ENCODE measurements at regions of chr2 and their contacts with region 1.

Region 1: DNA sequence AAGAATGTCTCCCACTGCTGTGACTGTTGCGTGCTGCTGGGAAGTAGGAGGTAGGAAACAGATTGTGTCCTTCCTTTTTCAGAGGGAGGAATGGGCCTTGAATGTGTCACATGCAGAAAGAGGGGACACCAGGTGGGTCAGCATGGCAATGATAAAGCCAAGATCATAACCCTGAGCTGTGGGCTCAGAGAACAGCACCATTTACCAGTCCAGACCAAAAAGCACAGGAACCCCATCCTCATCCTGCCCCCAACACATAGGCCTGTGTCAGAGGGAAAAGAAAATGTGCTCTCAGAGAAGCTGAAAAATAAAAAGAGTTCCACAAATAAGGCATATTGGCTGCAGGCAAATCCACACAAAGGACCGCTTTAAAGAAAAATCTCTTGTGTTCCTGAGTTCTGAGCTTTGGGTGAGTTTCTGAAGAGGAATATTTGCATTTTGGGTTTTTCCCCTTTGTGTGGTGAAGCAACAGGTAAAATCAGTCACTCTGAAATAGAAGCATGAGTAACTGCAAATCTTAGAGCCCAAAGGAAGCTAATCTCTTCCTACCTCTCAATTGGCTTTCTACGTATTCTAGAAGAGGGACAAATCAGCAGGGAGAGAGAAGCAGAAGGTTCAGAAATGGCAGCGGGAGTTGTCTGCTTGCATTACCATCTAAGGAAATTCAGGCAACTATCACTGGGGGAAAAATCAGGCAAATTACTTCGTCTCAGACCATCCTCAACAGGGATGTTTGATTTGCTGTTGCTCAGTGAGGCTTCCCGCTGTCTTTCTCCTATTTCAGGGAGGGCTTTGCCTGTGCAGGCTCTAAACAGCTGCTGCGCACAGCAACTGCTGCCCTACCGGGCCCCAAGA is 106.8 kb downstream of the BCL11A start:
- DNase-seq: peak; percentile 83
- ATAC-seq: peak; percentile 72
- H3K4me3 ChIP-seq: peak overlapping the region in 4 of 5 experiments; percentile 7 to 32 (median 28)
- H3K4me3 Mint-ChIP-seq: peak overlapping the region; percentile 77
- H3K27ac ChIP-seq: peak overlapping the region; percentile 88 to 99
- H3K27ac Mint-ChIP-seq: peak overlapping the region; percentile 97
- H3K4me1 ChIP-seq: peaks cover 85 to 87% of the 10 kb centered on the region in 2 donors
- H3K4me1 Mint-ChIP-seq: peaks cover 84% of the 10 kb centered on the region
- H3K27me3 ChIP-seq: no peaks in the 10 kb centered on the region
- H3K27me3 Mint-ChIP-seq: no peaks in the 10 kb centered on the region
- CTCF ChIP-seq: no peak

Region 2: DNA sequence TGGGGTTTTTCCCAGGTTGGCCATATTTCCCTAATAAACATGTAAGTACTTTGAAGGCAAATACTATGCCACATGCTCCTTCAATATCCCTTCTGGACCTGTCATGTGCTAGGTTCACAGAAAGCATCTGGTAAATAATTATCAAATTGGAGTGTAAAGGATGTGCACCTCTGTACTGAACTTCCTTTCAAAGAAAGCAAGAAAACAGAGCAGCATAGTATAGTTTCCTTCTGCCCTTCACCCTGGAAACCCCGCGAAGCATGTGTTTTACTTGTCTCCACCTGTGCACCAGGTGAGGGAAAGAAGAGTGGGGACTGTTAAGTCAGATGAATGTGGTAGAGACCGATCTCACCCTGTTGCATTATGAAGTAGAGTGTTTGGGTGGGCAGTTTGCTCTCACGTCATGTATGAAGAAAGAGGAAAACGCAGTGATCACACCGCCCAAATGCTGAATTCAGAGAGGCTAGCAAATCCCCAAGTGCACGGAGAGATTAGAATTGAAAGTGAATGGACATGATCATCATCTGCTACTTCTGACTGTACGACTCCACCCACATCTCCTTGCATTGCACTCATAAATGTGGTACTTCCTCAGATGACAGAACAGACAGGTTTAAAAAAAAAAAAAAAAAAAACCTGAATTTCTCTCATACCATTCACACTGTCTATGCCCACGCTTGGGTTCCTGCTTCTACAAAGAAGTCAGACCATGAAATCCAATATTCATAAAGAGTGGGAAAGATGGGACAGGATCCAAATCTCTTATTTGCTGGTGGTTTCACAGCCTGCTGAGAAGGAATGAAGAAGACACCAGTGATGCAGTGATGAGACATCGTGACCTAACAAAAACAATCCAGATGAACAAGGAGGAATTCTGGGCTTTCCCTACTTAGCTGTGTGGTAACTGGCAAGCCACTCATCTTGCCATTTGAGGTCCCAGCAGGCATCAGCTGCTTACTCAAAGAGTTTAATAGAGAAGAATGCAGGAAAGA is 341.8 kb before region 1 on chr2:
- CTCF ChIA-PET with region 1: no interaction called
- POLR2A ChIA-PET with region 1: no interaction called
- intact Hi-C with region 1: no loop called
- DNase-seq: peak; percentile 64
- ATAC-seq: peak; percentile 92
- H3K4me3 ChIP-seq: peak overlapping the region in 4 of 5 experiments; percentile 23 to 58 (median 52)
- H3K4me3 Mint-ChIP-seq: peak overlapping the region; percentile 87
- H3K27ac ChIP-seq: peak overlapping the region; percentile 19 to 51
- H3K27ac Mint-ChIP-seq: peak overlapping the region; percentile 57
- H3K4me1 ChIP-seq: peaks cover 18 to 25% of the 10 kb centered on the region in 2 donors
- H3K4me1 Mint-ChIP-seq: peaks cover 32% of the 10 kb centered on the region
- H3K27me3 ChIP-seq: no peaks in the 10 kb centered on the region
- H3K27me3 Mint-ChIP-seq: no peaks in the 10 kb centered on the region
- CTCF ChIP-seq: no peak

Region 3: GRCh38 chr2:60317844-60318243 is 128.8 kb before region 1 on chr2:
- CTCF ChIA-PET with region 1: interaction called, 3 read pairs
- POLR2A ChIA-PET with region 1: no interaction called
- intact Hi-C with region 1: loop called (anchors 5 kb)
- DNase-seq: peak; percentile 87
- ATAC-seq: peak; percentile 83
- H3K4me3 ChIP-seq: peak overlapping the region in 1 of 5 experiments; percentile 28
- H3K4me3 Mint-ChIP-seq: peak overlapping the region; percentile 46
- H3K27ac ChIP-seq: peak overlapping the region; percentile 56 to 75
- H3K27ac Mint-ChIP-seq: peak overlapping the region; percentile 73
- H3K4me1 ChIP-seq: peaks cover 73 to 74% of the 10 kb centered on the region in 2 donors
- H3K4me1 Mint-ChIP-seq: peaks cover 86% of the 10 kb centered on the region
- H3K27me3 ChIP-seq: no peaks in the 10 kb centered on the region
- H3K27me3 Mint-ChIP-seq: no peaks in the 10 kb centered on the region
- CTCF ChIP-seq: no peak

Region 4: GRCh38 chr2:60484133-60484645 is 37.5 kb after region 1 on chr2:
- CTCF ChIA-PET with region 1: interaction called, 3 read pairs
- POLR2A ChIA-PET with region 1: no interaction called
- intact Hi-C with region 1: loop called (anchors 2 kb)
- DNase-seq: peak; percentile 76
- ATAC-seq: peak; percentile 68
- H3K4me3 ChIP-seq: peak overlapping the region; percentile 11 to 59 (median 48)
- H3K4me3 Mint-ChIP-seq: peak overlapping the region; percentile 79
- H3K27ac ChIP-seq: peak overlapping the region; percentile 76 to 93
- H3K27ac Mint-ChIP-seq: peak overlapping the region; percentile 88
- H3K4me1 ChIP-seq: peaks cover 99% of the 10 kb centered on the region in 2 donors
- H3K4me1 Mint-ChIP-seq: peaks cover 94% of the 10 kb centered on the region
- H3K27me3 ChIP-seq: no peaks in the 10 kb centered on the region
- H3K27me3 Mint-ChIP-seq: no peaks in the 10 kb centered on the region
- CTCF ChIP-seq: no peak

Region 5: DNA sequence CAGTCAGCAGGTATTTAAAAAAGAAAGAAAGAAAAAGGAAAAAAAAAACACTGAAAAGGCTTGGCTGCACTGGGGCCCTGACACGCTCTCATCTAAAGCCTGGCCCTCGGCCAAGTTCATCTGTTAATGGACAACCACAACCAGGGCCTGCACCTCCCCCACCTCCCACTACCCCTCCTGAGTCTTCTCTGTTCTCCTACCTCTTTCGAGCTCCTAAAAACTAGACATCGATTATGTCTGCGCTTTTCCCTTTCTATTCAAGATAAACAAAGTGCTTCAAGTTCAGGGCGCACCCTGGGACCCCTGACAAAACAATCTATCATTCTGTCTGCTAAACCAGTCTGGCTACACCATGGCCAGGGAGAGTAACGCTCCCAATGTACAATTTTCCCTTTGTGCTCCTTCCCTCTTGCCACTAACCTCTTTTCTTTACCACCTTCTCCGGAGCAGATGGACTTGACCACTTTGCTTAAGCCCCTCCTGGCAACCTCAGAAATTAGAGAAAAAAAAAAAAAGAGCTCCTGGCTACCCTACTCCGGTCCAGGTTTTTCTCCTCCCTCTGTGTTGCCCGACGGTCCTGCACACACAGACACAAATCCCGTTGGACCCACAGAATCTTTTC is 84.1 kb after region 1 on chr2:
- CTCF ChIA-PET with region 1: no interaction called
- POLR2A ChIA-PET with region 1: interaction called, 5 read pairs
- intact Hi-C with region 1: loop called (anchors 5 kb)
- DNase-seq: peak; percentile 42
- ATAC-seq: peak; percentile 34
- H3K4me3 ChIP-seq: peak overlapping the region in 4 of 5 experiments; percentile 7 to 51 (median 20)
- H3K4me3 Mint-ChIP-seq: peak overlapping the region; percentile 77
- H3K27ac ChIP-seq: peak overlapping the region; percentile 33 to 80
- H3K27ac Mint-ChIP-seq: peak overlapping the region; percentile 79
- H3K4me1 ChIP-seq: peaks cover 99% of the 10 kb centered on the region in 2 donors
- H3K4me1 Mint-ChIP-seq: peaks cover 98% of the 10 kb centered on the region
- H3K27me3 ChIP-seq: no peaks in the 10 kb centered on the region
- H3K27me3 Mint-ChIP-seq: no peaks in the 10 kb centered on the region
- CTCF ChIP-seq: no peak